ENCODE measurements at regions of chr1 and their contacts with region 1.

Region 1: DNA sequence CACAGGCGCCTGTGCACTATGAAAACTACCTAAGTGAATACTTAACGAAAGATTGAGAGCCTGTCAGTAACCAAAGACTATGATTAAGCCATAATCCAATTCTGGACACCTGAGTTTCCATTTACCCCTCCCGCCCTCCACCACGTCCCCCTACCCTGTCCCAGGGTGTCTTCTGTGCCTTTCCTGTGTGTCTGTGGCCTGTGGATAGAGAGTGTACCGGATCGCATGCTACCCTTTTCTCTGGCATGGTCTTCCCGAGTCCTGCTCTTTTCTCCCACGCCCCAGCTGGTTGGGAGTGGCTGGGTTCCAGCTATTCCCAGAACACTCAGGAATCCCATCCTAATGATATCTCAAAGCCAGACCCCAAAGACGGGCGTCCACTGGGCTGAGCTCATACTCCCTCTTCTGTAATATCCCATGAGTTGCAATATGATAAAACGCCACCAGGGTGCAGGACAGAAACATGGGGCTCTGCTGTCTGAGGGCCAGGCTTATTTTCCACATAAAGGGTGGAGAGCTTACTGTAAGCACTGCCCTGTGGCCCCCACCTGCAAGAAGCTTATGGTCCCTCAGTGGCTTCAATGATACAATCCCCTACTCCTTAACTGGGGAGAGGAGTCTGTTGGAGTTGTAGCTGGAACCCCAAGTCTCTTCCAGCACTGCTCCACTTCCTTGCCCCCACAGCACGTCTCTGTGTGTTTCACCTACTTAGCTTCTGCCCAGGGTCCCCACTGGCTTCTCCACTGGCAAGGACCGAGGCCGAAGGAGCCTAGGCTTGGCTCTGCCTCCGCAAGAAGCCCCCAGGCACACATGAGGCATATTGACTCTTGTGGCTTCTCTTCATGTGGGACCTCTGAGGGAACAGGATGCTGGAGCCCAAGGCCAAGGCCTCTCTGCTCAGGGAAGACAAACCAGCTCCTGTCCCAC is 17.6 kb upstream of the ALX3 start:
- DNase-seq: peak; percentile 84

Region 2: GRCh38 chr1:109993885-109994284 is 94.2 kb before region 1 on chr1:
- CTCF ChIA-PET with region 1: no interaction called
- POLR2A ChIA-PET with region 1: no interaction called
- DNase-seq: no peak

Region 3: DNA sequence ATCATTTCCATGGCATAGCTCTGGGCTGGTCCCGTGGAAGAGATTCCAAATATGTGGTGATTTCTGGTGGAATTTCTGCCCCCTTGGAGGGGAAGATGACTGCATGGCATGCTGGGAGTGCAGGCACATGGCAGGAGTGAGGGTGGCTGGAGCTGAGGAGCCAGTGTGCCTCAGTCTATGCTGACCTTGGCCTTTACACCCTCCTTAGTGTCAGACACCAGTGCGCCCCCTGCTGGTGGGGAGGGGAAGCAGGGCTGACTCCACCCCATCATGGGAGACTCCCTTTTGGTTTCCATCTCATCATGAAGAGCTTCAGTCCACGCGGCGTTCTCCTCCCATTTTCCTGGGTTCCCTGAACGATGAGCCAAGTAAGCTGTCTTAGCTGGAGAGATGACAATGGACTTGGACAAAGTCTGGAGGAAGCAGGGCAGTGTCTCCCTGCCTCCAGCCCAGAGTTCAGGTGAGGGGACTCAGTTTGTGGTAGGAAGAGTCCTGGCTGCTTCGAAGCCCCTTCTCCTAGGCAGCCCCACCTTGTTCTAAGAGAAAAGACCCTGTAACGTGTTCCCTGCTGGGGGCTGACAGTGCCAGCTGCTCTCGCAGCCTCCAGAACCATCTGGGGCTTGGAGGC is 27.9 kb before region 1 on chr1:
- CTCF ChIA-PET with region 1: interaction called, 10 read pairs
- POLR2A ChIA-PET with region 1: no interaction called
- DNase-seq: peak; percentile 87

Region 4: GRCh38 chr1:110070685-110071242 is 17.3 kb before region 1 on chr1:
- CTCF ChIA-PET with region 1: interaction called, 14 read pairs
- POLR2A ChIA-PET with region 1: no interaction called
- DNase-seq: no peak

Region 5: DNA sequence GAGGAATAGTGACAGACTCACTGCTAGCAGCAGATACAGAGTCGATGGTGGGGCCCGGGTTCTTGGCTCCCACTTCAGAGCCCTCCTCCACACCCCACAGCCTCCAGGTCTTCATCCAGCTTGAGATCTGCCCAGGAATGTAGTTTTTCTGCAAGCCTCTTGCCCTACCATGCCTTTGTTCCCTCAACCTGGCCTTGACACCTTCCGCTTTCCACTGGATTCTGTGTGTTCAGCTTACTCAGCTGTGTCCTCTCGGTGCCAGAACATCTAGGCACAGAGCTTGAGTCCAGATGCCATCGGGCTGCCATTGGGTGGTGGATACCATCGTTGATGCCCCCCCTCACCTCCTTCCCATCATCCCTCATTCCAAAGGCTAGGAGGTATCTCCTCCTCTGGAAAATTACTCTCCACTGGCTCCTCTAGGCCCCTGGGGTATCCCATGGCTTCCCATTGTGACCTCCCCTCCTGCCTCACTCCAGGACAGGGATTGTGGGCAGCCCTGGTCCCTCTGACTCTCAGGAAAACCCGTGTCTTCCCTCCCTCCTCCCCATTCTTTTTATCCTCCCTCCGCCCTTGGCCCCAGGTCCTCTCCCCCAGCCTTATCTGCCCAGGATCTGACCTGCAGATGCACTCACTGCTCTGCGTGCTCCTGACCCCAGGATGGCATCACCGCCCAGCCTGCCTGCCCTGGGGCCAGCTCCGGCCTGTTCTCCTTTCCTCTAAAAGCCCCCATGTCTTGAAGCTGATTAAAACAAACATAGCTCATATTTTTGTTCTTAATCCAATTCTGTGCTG is 10.0 kb after region 1 on chr1:
- CTCF ChIA-PET with region 1: interaction called, 104 read pairs
- POLR2A ChIA-PET with region 1: interaction called, 5 read pairs
- DNase-seq: no peak

Region 6: GRCh38 chr1:110106013-110106941 is 18.2 kb after region 1 on chr1:
- CTCF ChIA-PET with region 1: interaction called, 104 read pairs
- POLR2A ChIA-PET with region 1: interaction called, 5 read pairs
- DNase-seq: peak; percentile 94

Measured in HEK293T (cell line).